ENCODE measurements at regions of chr13 and their contacts with region 1.

Region 1: GRCh38 chr13:24220086-24220703 is 59.7 kb downstream of the SPATA13 start:
- DNase-seq: no peak
- ATAC-seq: peak; percentile 80 to 89
- H3K4me3 ChIP-seq: no peak overlapping the region
- H3K27ac ChIP-seq: peak overlapping the region; percentile 37
- H3K4me1 ChIP-seq: peaks cover 52% of the 10 kb centered on the region
- H3K27me3 ChIP-seq: no peaks in the 10 kb centered on the region
- CTCF ChIP-seq: peak; percentile 81

Region 2: DNA sequence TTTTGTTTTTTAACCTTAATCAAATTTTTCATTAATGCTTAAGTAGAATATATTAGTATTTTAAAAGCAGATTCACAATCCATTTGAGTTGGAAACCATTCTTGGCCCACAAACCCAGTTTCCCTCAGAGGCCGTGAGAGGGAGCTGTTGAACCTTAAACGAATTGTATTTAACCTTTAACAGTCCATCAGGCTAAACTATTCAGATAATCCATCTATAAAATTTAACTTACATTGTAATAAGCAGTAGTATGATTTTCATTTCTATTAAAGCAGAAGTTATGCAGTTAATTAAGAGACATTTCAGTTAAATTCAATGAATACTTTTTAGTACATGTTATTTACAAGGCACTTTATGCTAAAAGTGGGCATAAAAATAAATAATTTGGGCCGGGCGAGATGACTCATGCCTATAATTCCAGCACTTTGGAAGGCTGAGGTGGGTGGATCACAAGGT is 199.8 kb before region 1 on chr13:
- intact Hi-C with region 1: loop called (anchors 10 kb)
- DNase-seq: no peak
- ATAC-seq: peak in 1 of 2 donors; percentile 72
- H3K4me3 ChIP-seq: no peak overlapping the region
- H3K27ac ChIP-seq: no peak overlapping the region
- H3K4me1 ChIP-seq: no peaks in the 10 kb centered on the region
- H3K27me3 ChIP-seq: no peaks in the 10 kb centered on the region
- CTCF ChIP-seq: peak; percentile 82

Region 3: DNA sequence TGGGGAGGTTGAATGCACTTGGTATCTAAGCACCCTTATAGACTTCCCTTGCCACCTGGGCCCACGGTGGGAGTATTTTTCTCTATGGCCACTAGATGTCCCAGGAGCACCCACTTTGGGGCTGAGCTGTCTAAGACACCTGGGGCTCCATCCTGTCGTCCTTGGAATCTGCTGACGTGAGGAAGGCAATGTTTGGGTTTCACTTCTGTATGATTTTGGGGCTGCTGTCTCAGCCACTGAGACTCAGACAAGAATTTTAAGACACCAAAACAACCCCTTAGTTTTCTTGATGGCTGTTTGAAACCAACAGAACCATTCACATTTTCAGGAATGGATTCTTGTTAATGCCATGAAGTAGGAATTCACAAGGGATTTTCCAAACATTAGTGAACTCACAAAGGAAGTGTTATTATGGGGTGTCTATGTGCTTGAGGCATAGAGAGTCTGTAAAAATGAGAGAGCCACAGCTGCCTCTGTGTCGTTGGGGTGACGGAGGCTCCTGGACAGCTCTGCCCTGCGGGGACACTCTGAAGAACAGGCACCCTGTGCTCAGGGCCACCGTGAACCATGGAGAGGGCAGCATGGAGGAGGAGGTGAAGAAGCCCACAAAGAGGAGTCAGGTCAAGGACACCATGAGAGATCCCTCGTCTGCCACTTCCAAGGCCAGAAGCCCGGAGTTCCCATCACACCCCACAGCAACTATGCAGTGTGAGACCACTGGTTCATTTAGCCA is 166.5 kb before region 1 on chr13:
- intact Hi-C with region 1: loop called (anchors 10 kb)
- DNase-seq: peak; percentile 63
- ATAC-seq: peak; percentile 89 to 91
- H3K4me3 ChIP-seq: no peak overlapping the region
- H3K27ac ChIP-seq: peak overlapping the region; percentile 72
- H3K4me1 ChIP-seq: peaks cover 35% of the 10 kb centered on the region
- H3K27me3 ChIP-seq: no peaks in the 10 kb centered on the region
- CTCF ChIP-seq: peak; percentile 75

Measured in lower lobe of right lung (tissue), 2 donors.